Colonic mucosa (tissue), 4 donors: ENCODE measurements at regions of chr9 and their contacts with region 1.

Region 1: GRCh38 chr9:101592788-101593187 is 2.0 kb downstream of the PPP3R2 start:
- DNase-seq: no peak
- H3K4me3 ChIP-seq: no peak overlapping the region
- H3K27ac ChIP-seq: no peak overlapping the region
- H3K4me1 ChIP-seq: no peaks in the 10 kb centered on the region
- H3K27me3 ChIP-seq: no peaks in the 10 kb centered on the region
- CTCF ChIP-seq: no peak

Region 2: GRCh38 chr9:101907466-101907865 is 314.7 kb after region 1 on chr9:
- intact Hi-C with region 1: loop called (anchors 10 kb)
- DNase-seq: no peak
- H3K4me3 ChIP-seq: no peak overlapping the region
- H3K27ac ChIP-seq: no peak overlapping the region
- H3K4me1 ChIP-seq: no peaks in the 10 kb centered on the region
- H3K27me3 ChIP-seq: no peaks in the 10 kb centered on the region
- CTCF ChIP-seq: no peak